Right cardiac atrium (tissue), 5 donors: ENCODE measurements at regions of chr1 and their contacts with region 1.

Region 1: DNA sequence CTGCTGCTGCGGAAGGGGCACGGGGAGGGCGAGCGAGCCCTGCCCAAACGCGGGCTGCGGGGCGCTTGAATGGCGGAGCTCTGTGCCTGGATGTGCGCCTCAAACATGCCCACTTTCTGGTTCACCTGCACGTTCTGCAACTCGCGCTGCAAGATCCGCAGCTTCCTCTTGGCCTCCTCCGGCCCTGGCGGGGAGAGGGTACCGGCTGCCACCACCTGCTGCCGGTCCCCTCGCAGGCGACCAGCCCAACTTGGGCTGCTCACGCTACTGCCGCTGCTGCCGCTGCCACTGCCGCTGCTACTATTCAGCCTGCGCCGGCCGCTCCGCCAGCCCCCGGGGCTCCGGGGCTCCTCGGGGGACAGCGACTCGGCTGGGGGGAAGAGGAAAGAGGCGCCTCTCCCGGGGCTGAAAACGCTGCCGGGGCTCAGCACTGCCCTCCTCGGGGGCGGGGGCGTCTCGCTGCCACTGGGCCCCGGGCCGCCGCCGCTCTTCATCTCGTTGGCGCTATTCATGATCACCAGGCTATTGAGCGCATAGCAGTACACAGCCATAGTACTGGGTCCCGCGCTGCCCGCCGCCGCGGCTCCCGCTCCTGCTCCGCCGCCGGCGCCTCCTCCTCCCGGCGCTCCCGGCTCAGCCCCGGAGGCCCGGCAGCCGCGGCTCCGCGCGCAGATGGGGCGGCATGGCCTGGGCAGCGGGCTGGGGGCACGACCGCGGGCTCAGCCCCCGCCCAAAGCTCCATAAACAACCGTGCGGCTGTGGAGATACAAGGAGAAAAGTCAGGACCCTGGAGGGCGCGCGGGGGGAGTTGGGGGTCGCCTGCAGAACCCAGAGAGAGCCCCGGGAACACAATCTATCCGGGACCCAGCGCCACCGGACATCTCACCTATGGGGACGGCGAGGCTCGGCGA is 1.9 kb downstream of the ITPKB start:
- DNase-seq: peak; percentile 32 to 79 (median 78)
- ATAC-seq: peak; percentile 53 to 72
- H3K4me3 ChIP-seq: peak overlapping the region; percentile 90
- H3K27ac ChIP-seq: peak overlapping the region; percentile 67
- H3K4me1 ChIP-seq: no peaks in the 10 kb centered on the region
- H3K27me3 ChIP-seq: no peaks in the 10 kb centered on the region

Region 2: DNA sequence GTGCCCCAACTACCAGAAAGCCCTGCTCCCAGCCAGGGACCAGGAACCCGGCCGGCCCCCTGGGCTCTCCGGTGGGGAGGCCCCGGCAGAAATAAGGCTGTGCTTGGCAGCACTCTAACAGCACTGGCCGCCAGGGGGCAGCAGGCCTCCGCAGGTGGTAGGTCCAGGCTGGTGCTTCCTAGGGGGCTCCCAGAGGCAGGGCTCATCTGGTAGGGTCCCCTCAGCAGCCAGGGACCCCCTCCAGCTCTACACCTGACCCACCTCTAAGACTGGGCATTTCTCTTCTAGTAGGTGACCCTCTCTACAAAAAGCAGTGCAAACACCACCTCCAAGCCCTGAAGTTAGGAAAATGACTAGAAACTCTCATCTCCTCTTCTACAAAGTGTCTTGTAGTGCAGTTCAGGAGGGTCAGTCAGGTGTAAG is 103.0 kb before region 1 on chr1:
- intact Hi-C with region 1: loop called in 2 of 4 experiments (anchors 5 to 10 kb)
- DNase-seq: peak; percentile 85 to 95 (median 92)
- ATAC-seq: peak; percentile 79 to 81
- H3K4me3 ChIP-seq: no peak overlapping the region
- H3K27ac ChIP-seq: no peak overlapping the region
- H3K4me1 ChIP-seq: no peaks in the 10 kb centered on the region
- H3K27me3 ChIP-seq: no peaks in the 10 kb centered on the region

Region 3: GRCh38 chr1:226649780-226650179 is 87.4 kb before region 1 on chr1:
- intact Hi-C with region 1: loop called in 1 of 4 experiments (anchors 2 kb)
- DNase-seq: peak; percentile 22 to 68 (median 33)
- ATAC-seq: peak in 1 of 2 donors; percentile 18
- H3K4me3 ChIP-seq: no peak overlapping the region
- H3K27ac ChIP-seq: peak overlapping the region; percentile 29
- H3K4me1 ChIP-seq: peaks cover 22% of the 10 kb centered on the region
- H3K27me3 ChIP-seq: no peaks in the 10 kb centered on the region

Region 4: DNA sequence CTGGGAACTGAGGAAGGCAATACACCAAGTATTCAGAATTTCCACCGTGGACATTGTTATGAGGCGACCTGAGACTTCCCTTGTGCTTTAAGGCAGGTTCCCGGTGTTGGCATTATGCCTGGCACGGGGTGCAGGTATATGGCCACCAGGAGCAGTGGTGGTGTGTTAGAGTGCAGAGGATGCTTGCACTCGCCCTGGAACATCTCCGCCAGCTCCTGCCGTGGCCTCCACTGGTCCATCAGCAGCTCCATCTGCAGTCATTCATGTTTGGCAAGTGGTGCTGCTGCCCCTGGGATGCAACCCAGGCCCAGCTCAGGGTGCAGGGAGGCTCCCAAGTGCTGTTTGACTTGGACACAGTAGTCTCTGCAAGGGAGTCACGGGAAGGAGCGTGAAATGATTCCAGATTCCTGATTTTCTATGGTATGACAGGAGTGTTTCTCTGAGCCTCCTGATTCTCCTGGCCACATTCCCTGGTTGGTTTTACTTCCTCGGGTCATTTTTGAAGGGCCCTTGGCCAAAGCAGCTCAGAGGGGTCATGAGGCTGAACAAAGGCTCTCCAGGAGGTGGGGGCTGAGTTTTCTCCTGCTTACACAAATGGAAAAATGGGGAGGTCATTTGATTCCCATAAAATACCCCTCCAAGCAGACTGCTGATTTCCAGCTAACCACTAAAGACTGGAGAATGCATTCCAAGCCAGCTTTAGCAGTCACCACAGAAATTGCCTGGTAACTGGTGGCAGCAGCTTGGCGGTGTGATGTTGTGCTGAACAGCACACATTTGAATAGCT is 72.8 kb after region 1 on chr1:
- intact Hi-C with region 1: no loop called
- DNase-seq: peak in 1 of 3 donors; percentile 21
- ATAC-seq: no peak
- H3K4me3 ChIP-seq: no peak overlapping the region
- H3K27ac ChIP-seq: no peak overlapping the region
- H3K4me1 ChIP-seq: peaks cover 2% of the 10 kb centered on the region
- H3K27me3 ChIP-seq: no peaks in the 10 kb centered on the region

Region 5: GRCh38 chr1:226820941-226821718 is 84.0 kb after region 1 on chr1:
- intact Hi-C with region 1: loop called in 3 of 4 experiments (anchors 5 to 10 kb)
- DNase-seq: peak; percentile 72 to 85 (median 80)
- ATAC-seq: peak; percentile 87 to 97
- H3K4me3 ChIP-seq: no peak overlapping the region
- H3K27ac ChIP-seq: peak overlapping the region; percentile 21
- H3K4me1 ChIP-seq: peaks cover 11% of the 10 kb centered on the region
- H3K27me3 ChIP-seq: no peaks in the 10 kb centered on the region